A673 (cell line): ENCODE measurements at regions of chr15 and their contacts with region 1.

Region 1: GRCh38 chr15:64379216-64379960 is 1.9 kb downstream of the PCLAF start:
- DNase-seq: peak; percentile 33
- H3K4me3 ChIP-seq: peak overlapping the region; percentile 70
- H3K27ac ChIP-seq: peak overlapping the region; percentile 16
- H3K4me1 ChIP-seq: peaks cover 18% of the 10 kb centered on the region
- H3K27me3 ChIP-seq: no peaks in the 10 kb centered on the region
- CTCF ChIP-seq: no peak

Region 2: DNA sequence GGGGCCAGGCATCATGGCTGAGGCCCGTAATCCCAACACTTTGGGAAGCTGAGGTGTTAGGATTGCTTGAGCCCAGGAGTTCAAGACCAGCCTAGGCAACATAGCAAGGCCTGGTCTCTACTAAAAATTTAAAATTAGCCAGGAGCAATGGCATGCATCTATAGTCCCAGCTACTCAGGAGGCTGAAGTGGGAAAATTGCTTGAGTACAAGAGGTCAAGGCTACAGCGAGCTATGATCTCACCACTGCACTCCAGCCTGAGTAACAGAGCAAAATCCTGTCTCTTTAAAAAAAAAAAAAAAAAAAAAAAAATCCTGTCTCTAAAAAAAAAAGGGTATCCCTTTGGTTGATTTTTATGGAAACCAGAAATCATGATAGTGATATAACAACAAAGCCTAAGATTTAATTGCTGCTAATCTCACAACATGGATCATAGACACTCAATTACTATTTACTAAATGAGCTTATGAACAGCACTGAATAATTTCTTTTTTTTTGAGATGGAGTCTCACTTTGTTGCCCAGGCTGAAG is 10.2 kb before region 1 on chr15:
- CTCF ChIA-PET with region 1: no interaction called
- POLR2A ChIA-PET with region 1: interaction called, 17 read pairs
- intact Hi-C with region 1: no loop called
- DNase-seq: no peak
- H3K4me3 ChIP-seq: no peak overlapping the region
- H3K27ac ChIP-seq: no peak overlapping the region
- H3K4me1 ChIP-seq: no peaks in the 10 kb centered on the region
- H3K27me3 ChIP-seq: no peaks in the 10 kb centered on the region
- CTCF ChIP-seq: no peak